ENCODE measurements at regions of chr2 and their contacts with region 1.

Region 1: GRCh38 chr2:46528880-46529279 is 49.5 kb downstream of the TMEM247 start:
- DNase-seq: no peak
- ATAC-seq: no peak
- H3K4me3 ChIP-seq: no peak overlapping the region
- H3K27ac ChIP-seq: no peak overlapping the region
- H3K4me1 ChIP-seq: no peaks in the 10 kb centered on the region
- H3K27me3 ChIP-seq: no peaks in the 10 kb centered on the region
- CTCF ChIP-seq: no peak

Region 2: DNA sequence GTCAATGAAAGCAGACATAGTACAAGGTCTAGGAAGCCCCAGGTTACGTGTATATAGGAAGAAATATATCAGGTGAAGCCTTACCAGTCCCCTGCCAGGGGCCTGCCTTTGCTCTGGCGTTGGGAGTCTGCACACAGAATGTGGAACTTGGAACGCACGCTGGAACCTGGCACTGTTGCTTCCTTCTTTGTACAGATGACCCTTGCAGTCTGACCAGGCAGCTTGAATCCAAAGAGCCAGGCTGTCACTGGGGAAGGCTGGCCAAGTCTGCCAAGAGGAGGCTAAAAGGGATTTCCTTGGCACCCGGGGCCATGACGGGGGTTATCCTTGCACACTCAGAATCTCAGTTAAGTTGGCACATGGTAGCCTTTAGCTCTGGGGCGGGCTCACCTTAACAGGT is 10.0 kb before region 1 on chr2:
- CTCF ChIA-PET with region 1: no interaction called
- POLR2A ChIA-PET with region 1: interaction called, 13 read pairs
- in situ Hi-C with region 1: no loop called
- intact Hi-C with region 1: no loop called
- DNase-seq: no peak
- ATAC-seq: no peak
- H3K4me3 ChIP-seq: no peak overlapping the region
- H3K27ac ChIP-seq: no peak overlapping the region
- H3K4me1 ChIP-seq: no peaks in the 10 kb centered on the region
- H3K27me3 ChIP-seq: no peaks in the 10 kb centered on the region
- CTCF ChIP-seq: no peak